ENCODE measurements at regions of chr19 and their contacts with region 1.

Region 1: DNA sequence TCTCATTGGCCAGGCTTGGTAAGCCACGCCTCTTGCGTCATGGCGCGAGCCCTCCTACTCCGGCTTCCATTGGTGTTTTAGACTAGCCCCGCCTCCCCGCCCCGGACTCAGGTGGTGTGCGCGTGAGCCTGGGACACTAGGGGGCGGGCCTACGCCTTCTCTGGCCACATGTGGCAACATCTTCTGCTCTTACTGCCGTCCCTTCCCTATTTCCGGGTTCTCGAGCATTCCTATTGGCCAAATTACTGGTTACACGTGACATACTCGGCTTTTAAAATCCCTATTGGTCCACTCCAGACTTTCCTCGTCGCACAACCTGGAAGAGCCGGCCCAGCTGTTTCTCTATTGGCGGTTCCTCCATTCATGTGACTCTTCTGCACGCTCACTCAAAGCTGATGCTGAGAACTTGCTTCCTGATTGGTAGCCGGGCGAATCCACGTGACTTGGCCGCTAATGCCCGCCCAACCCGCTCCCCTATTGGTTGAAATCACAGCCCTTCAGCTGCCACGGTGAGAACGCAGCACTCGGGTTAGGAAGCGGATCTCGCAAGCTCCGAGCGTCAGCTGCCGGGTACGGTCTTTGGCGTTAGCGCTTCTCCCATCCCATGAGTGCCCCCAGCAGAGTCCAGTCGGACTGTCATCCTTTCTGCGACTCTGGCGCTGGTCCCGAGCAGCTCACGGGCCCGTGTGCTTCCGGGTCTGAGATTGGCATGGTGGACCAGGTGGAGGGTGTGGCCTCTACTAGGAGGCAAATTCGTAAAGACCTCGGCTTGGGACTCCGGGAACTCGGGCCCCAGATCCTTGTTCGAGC is at the start of gene BLOC1S3:
- DNase-seq: peak; percentile 100
- H3K4me3 ChIP-seq: peak within 1 kb of the TSS; percentile 84 to 91
- H3K27ac ChIP-seq: peak within 1 kb of the TSS; percentile 96 to 99
- H3K4me1 ChIP-seq: peaks cover 3 to 24% of the 10 kb centered on the region in 2 donors
- H3K27me3 ChIP-seq: no peaks in the 10 kb centered on the region
- CTCF ChIP-seq: peak in 2 of 3 experiments; percentile 11 to 34
- total RNA-seq, gene BLOC1S3: 0.32 TPM

Region 2: DNA sequence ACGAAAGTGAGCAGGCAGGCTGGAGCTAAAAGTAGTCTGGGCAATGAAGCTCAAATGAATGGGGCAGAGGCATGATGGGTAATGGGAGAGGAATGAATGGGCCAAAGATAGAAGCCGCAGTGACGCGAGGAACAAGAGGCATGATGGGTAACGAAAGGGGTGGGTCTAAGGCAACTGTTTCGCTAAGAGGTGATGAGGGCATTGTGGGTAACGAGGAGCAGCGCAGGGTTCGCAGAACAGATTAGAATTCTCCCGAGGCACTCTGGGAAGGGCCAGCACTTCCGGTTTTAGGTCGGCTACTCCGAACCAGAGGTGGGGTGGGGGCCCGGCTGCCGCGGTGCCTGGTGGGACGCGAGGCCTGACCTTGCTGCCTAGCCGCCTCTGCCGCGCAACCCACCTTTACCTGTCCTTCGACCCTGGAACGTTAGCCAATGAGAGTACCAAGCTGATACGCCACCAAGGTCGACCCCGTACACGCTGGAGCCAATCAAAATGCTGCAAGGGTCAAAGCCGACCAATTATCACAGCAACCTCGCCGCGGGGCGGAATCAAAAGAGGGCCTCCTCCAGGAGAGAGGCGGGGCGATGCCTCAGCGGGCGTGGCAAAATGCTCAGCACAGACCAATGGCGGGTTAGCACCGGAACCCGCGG is 288.0 kb before region 1 on chr19:
- intact Hi-C with region 1: loop called (anchors 1 kb)
- DNase-seq: peak; percentile 100
- H3K4me3 ChIP-seq: peak overlapping the region; percentile 65 to 72
- H3K27ac ChIP-seq: peak overlapping the region; percentile 92 to 97
- H3K4me1 ChIP-seq: peaks cover 12 to 19% of the 10 kb centered on the region in 2 donors
- H3K27me3 ChIP-seq: no peaks in the 10 kb centered on the region
- CTCF ChIP-seq: no peak

Region 3: DNA sequence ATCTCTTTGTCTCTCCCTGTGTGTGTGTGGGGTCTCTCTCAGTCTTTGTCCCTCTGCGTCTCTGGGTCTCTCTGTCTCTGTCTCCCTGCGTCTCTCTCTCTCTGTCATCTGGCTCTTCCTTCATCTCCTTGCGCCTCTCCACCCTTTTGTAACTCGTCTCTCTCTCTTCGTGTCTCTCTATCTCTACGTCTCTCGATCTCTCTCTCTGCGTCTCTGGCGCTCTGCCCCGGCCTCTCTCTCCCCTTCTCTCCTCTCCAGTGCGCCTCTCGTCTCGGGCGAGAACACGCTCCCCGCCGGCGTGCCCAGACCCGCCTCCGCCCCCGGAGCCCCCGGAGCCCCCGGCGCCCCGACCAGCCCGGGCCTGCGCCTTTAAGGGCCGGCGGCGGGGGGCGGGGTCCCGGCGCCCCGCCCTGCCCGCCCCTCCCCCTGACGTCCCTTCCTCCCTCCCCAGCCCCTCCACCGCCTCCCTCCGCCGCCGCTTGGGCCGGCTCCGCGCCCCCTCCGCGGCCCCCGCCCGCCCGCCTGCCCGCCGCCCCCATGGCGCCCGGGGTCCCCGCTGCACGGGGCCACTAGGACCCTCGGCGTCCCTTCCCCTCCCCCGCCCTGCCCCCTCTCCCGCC is 72.5 kb after region 1 on chr19 and contains the start of gene MARK4:
- intact Hi-C with region 1: loop called (anchors 2 kb)
- DNase-seq: peak in 1 of 2 donors; percentile 68
- H3K4me3 ChIP-seq: peak within 1 kb of the TSS; percentile 83 to 99
- H3K27ac ChIP-seq: peak within 1 kb of the TSS; percentile 58 to 65
- H3K4me1 ChIP-seq: peaks cover 2 to 26% of the 10 kb centered on the region in 2 donors
- H3K27me3 ChIP-seq: no peaks in the 10 kb centered on the region
- CTCF ChIP-seq: no peak
- total RNA-seq, gene MARK4: 22.8 TPM

Region 4: GRCh38 chr19:45370410-45371204 is 192.1 kb after region 1 on chr19 and contains the start of gene ERCC2:
- intact Hi-C with region 1: loop called (anchors 1 kb)
- DNase-seq: peak; percentile 96 to 99
- H3K4me3 ChIP-seq: peak within 1 kb of the TSS; percentile 80 to 84
- H3K27ac ChIP-seq: peak within 1 kb of the TSS; percentile 65 to 69
- H3K4me1 ChIP-seq: peaks cover 0 to 8% of the 10 kb centered on the region in 2 donors
- H3K27me3 ChIP-seq: no peaks in the 10 kb centered on the region
- CTCF ChIP-seq: no peak
- total RNA-seq, gene ERCC2: 22.4 TPM

Measured in ascending aorta (tissue), 2 donors.